ENCODE measurements at regions of chr12 and their contacts with region 1.

Region 1: GRCh38 chr12:121494093-121494787 is 86.6 kb downstream of the KDM2B start:
- DNase-seq: no peak
- ATAC-seq: no peak
- H3K4me3 ChIP-seq: no peak overlapping the region
- H3K27ac ChIP-seq: no peak overlapping the region
- H3K4me1 ChIP-seq: peaks cover 57% of the 10 kb centered on the region
- H3K27me3 ChIP-seq: no peaks in the 10 kb centered on the region
- CTCF ChIP-seq: peak; percentile 77
- EP300 ChIP-seq: no peak
- POLR2A ChIP-seq: no peak
- RAD21 ChIP-seq: no peak

Region 2: DNA sequence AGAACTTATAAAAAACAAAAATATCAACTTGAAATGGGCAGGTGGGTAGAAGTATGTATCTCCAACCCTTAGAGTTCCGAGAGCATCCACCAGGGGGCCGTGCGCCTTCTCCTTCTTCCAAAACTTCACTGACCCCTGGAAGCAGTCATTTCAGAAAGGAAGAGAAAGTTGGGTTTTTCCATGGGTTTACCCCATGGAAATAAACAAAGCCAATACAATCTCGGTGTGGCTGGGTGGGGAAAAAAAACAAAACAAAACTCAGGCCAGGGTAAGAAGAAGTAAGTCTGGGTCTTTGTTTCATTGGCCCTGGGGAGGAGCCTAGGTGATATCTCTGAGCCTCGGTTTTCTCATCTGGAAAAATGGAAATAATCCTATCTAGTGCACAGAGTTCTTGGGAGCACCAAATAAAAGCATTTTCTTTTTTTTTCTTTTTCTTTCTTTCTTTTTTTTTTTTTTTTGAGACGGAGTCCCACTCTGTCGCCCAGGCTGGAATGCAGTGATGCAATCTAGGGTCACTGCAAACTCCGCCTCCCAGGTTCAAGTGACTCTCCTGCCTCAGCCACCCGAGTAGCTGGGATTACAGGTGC is 549.5 kb before region 1 on chr12:
- CTCF ChIA-PET with region 1: no interaction called
- POLR2A ChIA-PET with region 1: no interaction called
- in situ Hi-C with region 1: no loop called
- intact Hi-C with region 1: no loop called
- DNase-seq: no peak
- ATAC-seq: peak; percentile 70
- H3K4me3 ChIP-seq: peak overlapping the region in 2 of 3 experiments; percentile 13 to 33; a peak in 2 of 6 replicates
- H3K27ac ChIP-seq: no peak overlapping the region
- H3K4me1 ChIP-seq: peaks cover 51% of the 10 kb centered on the region
- H3K27me3 ChIP-seq: no peaks in the 10 kb centered on the region
- CTCF ChIP-seq: peak; percentile 68
- EP300 ChIP-seq: no peak
- POLR2A ChIP-seq: no peak
- RAD21 ChIP-seq: peak; percentile 46; the same call in 1 of the 2 replicates

Region 3: GRCh38 chr12:121522971-121523370 is 28.7 kb after region 1 on chr12:
- CTCF ChIA-PET with region 1: no interaction called
- POLR2A ChIA-PET with region 1: no interaction called
- in situ Hi-C with region 1: no loop called
- intact Hi-C with region 1: loop called (anchors 2 kb)
- DNase-seq: no peak
- ATAC-seq: no peak
- H3K4me3 ChIP-seq: no peak overlapping the region
- H3K27ac ChIP-seq: no peak overlapping the region
- H3K4me1 ChIP-seq: peaks cover 20% of the 10 kb centered on the region
- H3K27me3 ChIP-seq: no peaks in the 10 kb centered on the region
- CTCF ChIP-seq: no peak
- EP300 ChIP-seq: no peak
- POLR2A ChIP-seq: no peak
- RAD21 ChIP-seq: no peak

Region 4: DNA sequence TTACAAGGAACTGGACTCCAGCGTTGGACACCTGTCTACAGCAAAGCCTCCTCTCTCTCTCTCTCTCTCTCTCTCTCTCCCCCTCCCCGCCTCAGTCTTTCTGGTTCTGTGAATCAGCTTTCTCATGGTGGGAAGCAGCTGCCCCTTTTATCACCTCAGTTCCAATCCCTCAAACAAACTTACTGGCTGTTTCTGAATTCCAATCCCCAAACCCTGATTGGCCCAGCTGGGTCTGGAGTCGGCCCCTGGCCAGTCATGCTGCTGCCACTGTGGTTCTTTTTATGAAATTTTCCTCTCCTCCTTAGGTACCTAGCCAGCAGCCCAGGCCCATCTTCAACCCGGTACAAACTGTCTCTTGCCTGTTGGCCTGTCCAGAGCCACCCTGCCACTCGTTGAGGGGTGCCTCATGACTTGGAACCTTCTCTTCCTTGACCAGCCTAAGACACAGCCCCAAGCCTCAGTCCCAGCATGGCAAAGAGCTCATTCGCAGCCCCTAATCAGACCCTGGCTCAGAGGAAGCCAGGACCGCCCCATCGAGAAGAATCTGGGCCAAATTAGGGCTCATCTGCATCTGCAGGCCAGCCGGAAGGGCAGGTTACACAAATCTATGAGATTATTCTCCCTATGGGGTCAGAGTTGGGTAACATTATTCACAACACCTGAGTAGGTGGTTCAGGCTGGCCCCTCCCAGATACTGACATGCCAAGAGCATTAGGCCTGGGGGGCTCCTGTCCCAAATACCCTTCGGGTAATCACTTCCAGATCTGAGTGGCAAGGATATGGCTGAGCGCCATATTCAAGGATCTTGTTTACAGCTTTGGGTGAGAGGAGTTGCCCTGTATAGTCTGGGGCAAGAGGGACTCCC is 184.7 kb after region 1 on chr12:
- CTCF ChIA-PET with region 1: interaction called, 20 read pairs
- POLR2A ChIA-PET with region 1: no interaction called
- in situ Hi-C with region 1: loop called (anchors 5 kb)
- intact Hi-C with region 1: no loop called
- DNase-seq: no peak
- ATAC-seq: peak; percentile 37
- H3K4me3 ChIP-seq: peak overlapping the region in 1 of 3 experiments; percentile 22; a peak in 1 of 6 replicates
- H3K27ac ChIP-seq: no peak overlapping the region
- H3K4me1 ChIP-seq: peaks cover 18% of the 10 kb centered on the region
- H3K27me3 ChIP-seq: peaks cover 0 to 5% of the 10 kb centered on the region in 2 experiments; a peak in 1 of 5 replicates
- CTCF ChIP-seq: no peak
- EP300 ChIP-seq: no peak
- POLR2A ChIP-seq: no peak
- RAD21 ChIP-seq: no peak